ENCODE measurements at regions of chr10 and their contacts with region 1.

Region 1: DNA sequence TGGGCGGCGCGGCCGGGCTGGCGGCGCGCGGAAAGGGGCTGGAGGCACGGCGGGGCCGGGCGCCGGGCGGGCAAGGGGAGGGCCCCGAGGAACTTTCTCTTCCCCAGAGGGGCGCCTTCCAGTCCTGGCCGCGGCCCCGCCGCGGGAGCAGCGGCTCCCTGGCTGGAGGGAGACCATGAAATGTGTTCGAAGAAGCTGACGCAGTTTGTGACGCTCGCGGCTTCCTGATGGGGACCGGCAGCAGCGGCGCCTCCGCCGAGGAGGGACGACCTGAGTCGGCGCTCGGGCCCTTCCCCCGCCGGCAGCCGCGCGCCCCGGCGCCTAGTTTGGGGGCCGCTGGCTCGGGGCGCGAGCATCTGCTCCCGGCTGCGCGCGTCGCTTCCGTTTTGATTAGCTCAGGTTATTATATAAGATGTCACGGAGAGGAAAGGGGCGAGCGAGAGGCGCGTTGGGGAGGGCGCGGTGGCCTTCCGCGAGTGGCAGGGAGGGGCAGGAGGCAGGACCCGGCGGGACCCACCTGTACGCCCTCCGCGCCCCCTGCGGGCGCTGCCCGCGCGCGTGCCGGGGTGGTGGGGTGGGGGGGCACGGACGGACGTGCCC is 57.1 kb upstream of the PCGF5 start:
- DNase-seq: peak; percentile 78 to 90
- ATAC-seq: peak; percentile 70
- H3K4me3 ChIP-seq: peak overlapping the region; percentile 97 to 98
- H3K27ac ChIP-seq: peak overlapping the region; percentile 73 to 97
- H3K4me1 ChIP-seq: peaks cover 3 to 7% of the 10 kb centered on the region in 2 donors
- H3K27me3 ChIP-seq: no peaks in the 10 kb centered on the region

Region 2: DNA sequence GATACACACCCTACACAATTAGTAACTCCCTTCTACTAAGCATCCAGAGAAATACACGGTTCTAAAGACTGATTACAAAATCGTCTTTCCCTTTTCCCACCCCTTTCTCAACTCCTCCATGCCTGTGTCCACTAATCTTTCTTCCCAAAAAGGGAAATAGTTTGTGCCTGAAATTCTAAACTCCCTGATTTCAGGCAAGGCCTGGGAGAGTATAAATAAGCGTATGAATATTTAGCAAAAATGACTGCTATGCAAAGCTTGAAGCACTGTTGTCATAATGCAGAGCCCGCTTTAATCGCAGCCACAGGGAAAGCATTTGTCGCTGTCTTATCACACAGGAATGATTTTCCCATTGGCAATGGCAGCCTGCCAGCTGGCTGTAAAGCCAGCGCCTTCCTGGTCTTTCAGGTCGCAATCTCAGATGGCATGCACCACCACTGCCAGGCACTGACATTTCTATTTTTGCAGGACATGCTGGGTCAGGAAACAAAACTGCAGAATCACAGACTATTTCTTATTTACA is 85.8 kb before region 1 on chr10:
- intact Hi-C with region 1: loop called in 1 of 2 experiments (anchors 2 kb)
- DNase-seq: peak; percentile 92 to 94
- ATAC-seq: peak; percentile 79
- H3K4me3 ChIP-seq: no peak overlapping the region
- H3K27ac ChIP-seq: peak overlapping the region; percentile 96 to 100
- H3K4me1 ChIP-seq: peaks cover 13 to 17% of the 10 kb centered on the region in 2 donors
- H3K27me3 ChIP-seq: no peaks in the 10 kb centered on the region

Region 3: GRCh38 chr10:91088300-91089140 is 74.8 kb before region 1 on chr10:
- intact Hi-C with region 1: loop called in 1 of 2 experiments (anchors 5 kb)
- DNase-seq: peak in 1 of 2 donors; percentile 47
- ATAC-seq: peak; percentile 76
- H3K4me3 ChIP-seq: no peak overlapping the region
- H3K27ac ChIP-seq: peak overlapping the region; percentile 61 to 76
- H3K4me1 ChIP-seq: peaks cover 0 to 3% of the 10 kb centered on the region in 2 donors
- H3K27me3 ChIP-seq: no peaks in the 10 kb centered on the region

Region 4: GRCh38 chr10:91220194-91220953 is 57.0 kb after region 1 on chr10 and contains the start of gene PCGF5:
- intact Hi-C with region 1: loop called in 1 of 2 experiments (anchors 2 kb)
- DNase-seq: peak; percentile 95 to 96
- ATAC-seq: peak; percentile 98
- H3K4me3 ChIP-seq: peak within 1 kb of the TSS; percentile 67 to 84
- H3K27ac ChIP-seq: peak within 1 kb of the TSS; percentile 83 to 85
- H3K4me1 ChIP-seq: peaks cover 4 to 8% of the 10 kb centered on the region in 2 donors
- H3K27me3 ChIP-seq: no peaks in the 10 kb centered on the region
- total RNA-seq, gene PCGF5: 77.7 to 145 TPM

Region 5: DNA sequence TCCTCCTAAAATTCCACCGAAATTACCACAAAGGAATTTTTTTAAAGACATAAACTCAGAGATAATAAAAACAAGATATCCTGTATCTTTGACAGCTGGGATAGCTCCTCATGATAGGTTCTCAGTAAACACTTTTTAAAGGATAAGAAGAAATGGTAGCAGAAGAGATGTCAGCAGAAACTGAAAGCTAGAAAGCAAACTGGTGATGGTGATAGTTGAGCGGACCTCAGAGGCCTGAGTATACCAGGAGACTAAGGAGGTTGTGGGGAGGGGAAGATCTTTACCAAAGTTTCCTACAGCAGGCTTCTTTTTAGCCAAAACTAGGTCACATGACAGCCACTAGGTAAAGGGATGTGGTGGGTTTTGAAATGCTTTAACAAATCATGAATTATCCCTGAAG is 79.6 kb after region 1 on chr10:
- intact Hi-C with region 1: no loop called
- DNase-seq: no peak
- ATAC-seq: no peak
- H3K4me3 ChIP-seq: no peak overlapping the region
- H3K27ac ChIP-seq: no peak overlapping the region
- H3K4me1 ChIP-seq: peaks cover 4 to 11% of the 10 kb centered on the region in 2 donors
- H3K27me3 ChIP-seq: no peaks in the 10 kb centered on the region

Measured in aorta (tissue), 5 donors.